ENCODE measurements at regions of chr16 and their contacts with region 1.

Region 1: DNA sequence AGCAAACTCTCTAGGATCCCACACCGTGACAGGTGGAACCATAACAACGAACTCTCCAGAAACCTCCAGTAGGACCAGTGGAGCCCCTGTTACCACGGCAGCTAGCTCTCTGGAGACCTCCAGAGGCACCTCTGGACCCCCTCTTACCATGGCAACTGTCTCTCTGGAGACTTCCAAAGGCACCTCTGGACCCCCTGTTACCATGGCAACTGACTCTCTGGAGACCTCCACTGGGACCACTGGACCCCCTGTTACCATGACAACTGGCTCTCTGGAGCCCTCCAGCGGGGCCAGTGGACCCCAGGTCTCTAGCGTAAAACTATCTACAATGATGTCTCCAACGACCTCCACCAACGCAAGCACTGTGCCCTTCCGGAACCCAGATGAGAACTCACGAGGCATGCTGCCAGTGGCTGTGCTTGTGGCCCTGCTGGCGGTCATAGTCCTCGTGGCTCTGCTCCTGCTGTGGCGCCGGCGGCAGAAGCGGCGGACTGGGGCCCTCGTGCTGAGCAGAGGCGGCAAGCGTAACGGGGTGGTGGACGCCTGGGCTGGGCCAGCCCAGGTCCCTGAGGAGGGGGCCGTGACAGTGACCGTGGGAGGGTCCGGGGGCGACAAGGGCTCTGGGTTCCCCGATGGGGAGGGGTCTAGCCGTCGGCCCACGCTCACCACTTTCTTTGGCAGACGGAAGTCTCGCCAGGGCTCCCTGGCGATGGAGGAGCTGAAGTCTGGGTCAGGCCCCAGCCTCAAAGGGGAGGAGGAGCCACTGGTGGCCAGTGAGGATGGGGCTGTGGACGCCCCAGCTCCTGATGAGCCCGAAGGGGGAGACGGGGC is 1.3 kb downstream of the SPN start:
- DNase-seq: peak; percentile 65
- ATAC-seq: peak; percentile 15
- H3K4me3 Mint-ChIP-seq: peak overlapping the region; percentile 100
- H3K27ac Mint-ChIP-seq: peak overlapping the region; percentile 94
- H3K4me1 Mint-ChIP-seq: peaks cover 46% of the 10 kb centered on the region
- H3K27me3 Mint-ChIP-seq: no peaks in the 10 kb centered on the region

Region 2: DNA sequence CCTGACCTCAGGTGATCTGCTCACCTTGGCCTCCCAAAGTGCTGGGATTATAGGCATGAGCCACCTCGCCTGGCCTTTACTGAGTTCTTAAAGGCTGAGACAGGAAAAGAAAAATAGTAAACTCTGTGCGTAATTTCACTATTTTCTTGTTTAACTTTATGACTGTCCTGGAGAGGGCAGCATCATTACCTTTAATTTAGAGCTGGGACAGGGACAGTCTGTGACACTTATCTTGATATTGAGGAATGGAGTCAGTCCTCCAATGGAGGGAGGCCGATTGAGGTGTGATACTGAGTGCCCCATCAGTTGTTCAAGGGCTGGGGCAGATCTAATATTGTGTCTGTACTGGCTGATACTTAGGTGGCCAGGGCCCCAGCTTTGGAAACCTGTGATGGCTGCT is 22.7 kb before region 1 on chr16:
- CTCF ChIA-PET with region 1: interaction called, 17 read pairs
- DNase-seq: no peak
- ATAC-seq: peak; percentile 57
- H3K4me3 Mint-ChIP-seq: peak overlapping the region; percentile 49
- H3K27ac Mint-ChIP-seq: peak overlapping the region; percentile 84
- H3K4me1 Mint-ChIP-seq: peaks cover 51% of the 10 kb centered on the region
- H3K27me3 Mint-ChIP-seq: no peaks in the 10 kb centered on the region

Region 3: GRCh38 chr16:29765167-29766032 is 101.1 kb after region 1 on chr16:
- CTCF ChIA-PET with region 1: no interaction called
- DNase-seq: no peak
- ATAC-seq: no peak
- H3K4me3 Mint-ChIP-seq: no peak overlapping the region
- H3K27ac Mint-ChIP-seq: no peak overlapping the region
- H3K4me1 Mint-ChIP-seq: no peaks in the 10 kb centered on the region
- H3K27me3 Mint-ChIP-seq: peaks cover 5% of the 10 kb centered on the region

Measured in activated CD8-positive, alpha-beta memory T cell treated with anti-CD3 and anti-CD28 coated beads, Interleukin-2, amount 10 ng/mL, durations not matched to agents 7 days and 5 days (primary cell).